Posterior vena cava (tissue), 2 donors: ENCODE measurements at regions of chr11 and their contacts with region 1.

Region 1: DNA sequence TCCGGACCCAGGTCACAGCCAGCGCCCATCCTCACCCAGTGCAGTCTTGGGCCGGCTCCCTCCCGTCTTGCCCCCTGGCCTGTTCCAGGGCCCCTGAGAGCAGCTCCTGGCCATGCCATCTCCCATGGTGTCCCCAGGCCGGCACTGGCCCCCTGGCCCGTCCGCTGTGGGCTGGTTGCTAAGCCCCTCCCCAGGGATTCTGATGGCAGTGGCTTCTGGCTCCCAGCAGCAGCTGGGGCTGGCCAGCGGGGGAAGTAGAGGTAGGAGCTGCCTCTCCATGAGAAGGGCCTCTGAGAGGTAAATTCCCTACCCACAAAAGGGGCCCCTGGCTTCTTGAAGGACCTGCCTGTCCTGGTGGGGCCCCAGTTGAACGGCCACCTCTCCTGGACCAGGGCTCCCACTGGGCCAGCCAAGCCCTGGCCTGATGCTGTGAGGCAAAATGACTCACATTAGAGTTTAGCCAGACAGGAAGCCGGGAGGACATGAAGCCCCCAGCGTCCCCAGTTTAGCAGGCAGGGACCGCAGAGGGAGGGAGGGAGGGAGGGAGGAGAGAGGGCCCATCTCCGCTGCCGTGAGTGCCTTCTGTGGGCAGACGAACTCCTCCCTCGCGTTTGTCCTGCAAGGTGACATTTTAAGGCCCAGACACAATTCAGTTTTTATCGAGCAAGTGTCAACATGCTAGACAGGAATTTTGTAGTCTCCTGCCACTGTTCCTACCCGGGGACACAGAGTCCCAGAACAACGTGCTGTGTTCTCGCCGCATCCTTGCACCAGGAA is 32.9 kb upstream of the GAL start:
- DNase-seq: peak; percentile 73

Region 2: GRCh38 chr11:68684385-68685356 is 33.3 kb after region 1 on chr11 and contains the start of gene GAL:
- intact Hi-C with region 1: no loop called
- DNase-seq: peak; percentile 75
- total RNA-seq, gene GAL: 0.52 TPM in 1 of 2 donors, not detected in the other

Region 3: DNA sequence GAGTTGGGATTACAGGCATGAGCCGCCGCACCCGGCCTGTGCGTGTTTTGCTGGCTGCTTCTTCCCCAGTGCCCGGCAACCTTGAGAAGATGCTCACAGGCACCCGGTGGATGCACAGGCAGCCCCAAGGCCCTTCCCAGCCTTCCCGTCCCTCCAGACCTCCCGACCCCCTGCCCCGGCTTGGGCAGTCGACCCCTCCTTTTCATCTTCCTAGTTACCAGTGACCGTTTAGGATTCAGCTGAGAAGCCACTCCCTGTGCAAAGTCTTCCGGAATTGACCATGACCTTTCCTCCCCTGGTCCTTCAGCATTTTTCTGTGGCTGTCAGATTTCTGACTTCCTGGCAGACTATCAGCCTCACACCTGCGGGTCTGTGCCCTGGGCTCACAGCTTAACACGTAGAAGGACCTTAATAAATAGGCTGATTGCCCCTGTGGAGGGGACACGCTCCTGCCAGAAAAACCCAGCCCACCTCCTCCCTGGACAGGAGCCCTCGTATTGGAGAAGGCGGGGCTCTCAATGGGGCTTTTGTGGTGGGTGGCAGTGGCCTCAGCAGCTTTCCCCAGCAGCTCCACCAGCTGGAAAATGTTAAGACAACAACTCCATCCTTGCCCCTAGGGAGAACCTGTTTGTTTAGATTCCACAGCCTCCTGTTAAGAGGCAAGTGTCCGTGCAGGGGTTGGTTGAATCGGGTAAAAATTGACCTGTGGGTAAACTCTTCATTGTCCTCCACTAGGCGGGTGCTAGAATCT is 1416.4 kb after region 1 on chr11:
- intact Hi-C with region 1: loop called in 1 of 2 experiments (anchors 5 kb)
- DNase-seq: peak; percentile 64